ENCODE measurements at regions of chr2 and their contacts with region 1.

Region 1: GRCh38 chr2:143545949-143546255 is 416.7 kb downstream of the ARHGAP15 start:
- DNase-seq: no peak
- ATAC-seq: no peak
- H3K4me3 ChIP-seq: no peak overlapping the region
- H3K4me3 Mint-ChIP-seq: no peak overlapping the region
- H3K27ac ChIP-seq: no peak overlapping the region
- H3K27ac Mint-ChIP-seq: no peak overlapping the region
- H3K4me1 ChIP-seq: peaks cover 25% of the 10 kb centered on the region
- H3K4me1 Mint-ChIP-seq: peaks cover 43% of the 10 kb centered on the region
- H3K27me3 ChIP-seq: no peaks in the 10 kb centered on the region
- H3K27me3 Mint-ChIP-seq: no peaks in the 10 kb centered on the region
- CTCF ChIP-seq: no peak

Region 2: DNA sequence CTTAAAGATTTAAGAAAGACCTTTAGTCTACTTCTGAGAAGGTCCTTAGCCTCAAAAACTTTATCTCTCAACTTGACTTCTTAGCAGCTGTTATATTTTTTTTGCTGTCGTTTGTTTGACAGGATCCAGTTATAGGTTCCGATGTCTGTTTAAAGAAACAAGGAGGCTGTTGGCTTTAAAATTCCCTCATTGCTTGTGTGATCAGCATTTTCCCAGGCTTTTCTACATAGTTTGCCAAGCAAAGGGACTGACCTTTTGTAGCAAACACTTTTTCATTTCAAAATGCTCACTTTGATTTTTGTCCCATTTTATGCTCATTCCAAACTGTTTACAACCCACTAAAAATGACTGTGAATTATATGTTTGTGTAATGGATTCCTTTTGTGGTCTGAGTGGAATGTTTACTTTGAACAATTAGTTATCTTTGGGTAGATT is 21.8 kb before region 1 on chr2:
- CTCF ChIA-PET with region 1: no interaction called
- POLR2A ChIA-PET with region 1: no interaction called
- intact Hi-C with region 1: loop called in 1 of 2 experiments (anchors 2 kb)
- DNase-seq: no peak
- ATAC-seq: no peak
- H3K4me3 ChIP-seq: no peak overlapping the region
- H3K4me3 Mint-ChIP-seq: no peak overlapping the region
- H3K27ac ChIP-seq: no peak overlapping the region
- H3K27ac Mint-ChIP-seq: peak overlapping the region; percentile 29
- H3K4me1 ChIP-seq: peaks cover 21% of the 10 kb centered on the region
- H3K4me1 Mint-ChIP-seq: peaks cover 72% of the 10 kb centered on the region
- H3K27me3 ChIP-seq: no peaks in the 10 kb centered on the region
- H3K27me3 Mint-ChIP-seq: no peaks in the 10 kb centered on the region
- CTCF ChIP-seq: no peak